ENCODE measurements at regions of chr6 and their contacts with region 1.

Region 1: GRCh38 chr6:119110601-119111548 is 32.4 kb upstream of the FAM184A start:
- DNase-seq: peak; percentile 32
- H3K4me3 Mint-ChIP-seq: no peak overlapping the region
- H3K27ac Mint-ChIP-seq: no peak overlapping the region
- H3K4me1 Mint-ChIP-seq: peaks cover 9% of the 10 kb centered on the region
- H3K27me3 Mint-ChIP-seq: no peaks in the 10 kb centered on the region

Region 2: DNA sequence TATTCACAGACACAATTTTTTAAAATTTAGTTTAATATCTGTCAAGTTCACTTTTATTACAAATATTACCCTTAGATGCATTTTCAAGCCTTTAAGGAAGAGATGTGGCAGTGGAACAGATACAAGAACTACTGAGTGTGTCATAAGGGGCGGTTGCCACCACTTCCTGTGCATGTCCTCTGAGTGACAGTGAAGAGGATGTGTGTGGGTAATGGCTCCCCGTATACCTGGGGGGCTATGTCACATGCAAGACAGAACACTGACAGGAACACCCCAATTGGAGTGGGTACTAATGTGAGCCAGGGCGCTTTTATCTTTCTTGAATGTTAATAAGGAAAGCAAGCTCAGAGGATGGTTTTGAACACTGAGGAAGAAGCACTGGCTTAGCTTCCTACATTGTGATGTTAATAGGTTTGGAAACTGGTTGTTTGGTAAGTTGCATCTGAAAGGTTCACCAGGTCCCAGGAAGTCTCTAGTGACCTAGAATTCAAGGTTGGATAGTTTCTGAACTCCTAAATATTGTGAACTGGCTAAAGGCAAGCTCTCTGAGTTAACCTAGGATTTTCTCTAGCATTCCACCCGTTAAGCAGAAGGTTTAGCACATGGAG is 300.4 kb before region 1 on chr6:
- CTCF ChIA-PET with region 1: interaction called, 6 read pairs
- POLR2A ChIA-PET with region 1: no interaction called
- intact Hi-C with region 1: loop called (anchors 2 kb)
- DNase-seq: peak; percentile 77
- H3K4me3 Mint-ChIP-seq: no peak overlapping the region
- H3K27ac Mint-ChIP-seq: peak overlapping the region; percentile 77
- H3K4me1 Mint-ChIP-seq: peaks cover 55% of the 10 kb centered on the region
- H3K27me3 Mint-ChIP-seq: no peaks in the 10 kb centered on the region

Region 3: DNA sequence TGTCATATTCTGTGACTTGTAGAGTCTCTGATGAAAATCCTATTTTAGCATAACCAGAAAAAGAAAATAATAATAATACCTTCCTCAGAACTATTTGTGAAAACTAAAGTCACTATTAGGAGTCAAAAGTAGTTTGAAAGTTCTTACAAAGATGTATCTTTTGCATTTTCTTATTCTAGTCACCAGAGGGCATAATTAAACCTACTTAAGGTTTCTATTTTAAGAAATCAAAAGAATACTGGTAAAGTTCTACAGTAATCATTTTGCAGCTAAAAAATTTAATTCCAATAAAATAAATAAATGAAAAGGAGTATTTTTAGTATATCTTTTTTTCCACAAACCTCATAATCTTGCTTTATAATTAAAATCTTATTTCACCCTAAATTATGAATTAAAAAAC is 147.9 kb before region 1 on chr6:
- CTCF ChIA-PET with region 1: interaction called, 200 read pairs
- POLR2A ChIA-PET with region 1: no interaction called
- intact Hi-C with region 1: loop called (anchors 1 kb)
- DNase-seq: no peak
- H3K4me3 Mint-ChIP-seq: no peak overlapping the region
- H3K27ac Mint-ChIP-seq: no peak overlapping the region
- H3K4me1 Mint-ChIP-seq: peaks cover 6% of the 10 kb centered on the region
- H3K27me3 Mint-ChIP-seq: no peaks in the 10 kb centered on the region

Region 4: GRCh38 chr6:119096721-119097565 is 13.9 kb before region 1 on chr6:
- CTCF ChIA-PET with region 1: interaction called, 13 read pairs
- POLR2A ChIA-PET with region 1: no interaction called
- intact Hi-C with region 1: no loop called
- DNase-seq: no peak
- H3K4me3 Mint-ChIP-seq: no peak overlapping the region
- H3K27ac Mint-ChIP-seq: no peak overlapping the region
- H3K4me1 Mint-ChIP-seq: peaks cover 15% of the 10 kb centered on the region
- H3K27me3 Mint-ChIP-seq: no peaks in the 10 kb centered on the region

Region 5: GRCh38 chr6:119129148-119129967 is 18.5 kb after region 1 on chr6:
- CTCF ChIA-PET with region 1: interaction called, 12 read pairs
- POLR2A ChIA-PET with region 1: interaction called, 4 read pairs
- intact Hi-C with region 1: no loop called
- DNase-seq: no peak
- H3K4me3 Mint-ChIP-seq: no peak overlapping the region
- H3K27ac Mint-ChIP-seq: no peak overlapping the region
- H3K4me1 Mint-ChIP-seq: peaks cover 2% of the 10 kb centered on the region
- H3K27me3 Mint-ChIP-seq: no peaks in the 10 kb centered on the region

Region 6: GRCh38 chr6:119395192-119395591 is 284.3 kb after region 1 on chr6:
- CTCF ChIA-PET with region 1: no interaction called
- POLR2A ChIA-PET with region 1: no interaction called
- intact Hi-C with region 1: no loop called
- DNase-seq: no peak
- H3K4me3 Mint-ChIP-seq: no peak overlapping the region
- H3K27ac Mint-ChIP-seq: no peak overlapping the region
- H3K4me1 Mint-ChIP-seq: no peaks in the 10 kb centered on the region
- H3K27me3 Mint-ChIP-seq: no peaks in the 10 kb centered on the region